GM12878 (cell line): ENCODE measurements at regions of chr17 and their contacts with region 1.

Region 1: GRCh38 chr17:2386400-2387085 is 14.3 kb downstream of the MNT start:
- DNase-seq: no peak
- ATAC-seq: no peak
- H3K4me3 ChIP-seq: no peak overlapping the region
- H3K27ac ChIP-seq: no peak overlapping the region
- H3K4me1 ChIP-seq: peaks cover 4% of the 10 kb centered on the region; the same call in 1 of the 2 replicates
- H3K27me3 ChIP-seq: no peaks in the 10 kb centered on the region
- CTCF ChIP-seq: no peak
- EP300 ChIP-seq: no peak
- POLR2A ChIP-seq: 0 out of 2 replicates have a peak, but pooled peaks have one; percentile 16
- RAD21 ChIP-seq: no peak

Region 2: DNA sequence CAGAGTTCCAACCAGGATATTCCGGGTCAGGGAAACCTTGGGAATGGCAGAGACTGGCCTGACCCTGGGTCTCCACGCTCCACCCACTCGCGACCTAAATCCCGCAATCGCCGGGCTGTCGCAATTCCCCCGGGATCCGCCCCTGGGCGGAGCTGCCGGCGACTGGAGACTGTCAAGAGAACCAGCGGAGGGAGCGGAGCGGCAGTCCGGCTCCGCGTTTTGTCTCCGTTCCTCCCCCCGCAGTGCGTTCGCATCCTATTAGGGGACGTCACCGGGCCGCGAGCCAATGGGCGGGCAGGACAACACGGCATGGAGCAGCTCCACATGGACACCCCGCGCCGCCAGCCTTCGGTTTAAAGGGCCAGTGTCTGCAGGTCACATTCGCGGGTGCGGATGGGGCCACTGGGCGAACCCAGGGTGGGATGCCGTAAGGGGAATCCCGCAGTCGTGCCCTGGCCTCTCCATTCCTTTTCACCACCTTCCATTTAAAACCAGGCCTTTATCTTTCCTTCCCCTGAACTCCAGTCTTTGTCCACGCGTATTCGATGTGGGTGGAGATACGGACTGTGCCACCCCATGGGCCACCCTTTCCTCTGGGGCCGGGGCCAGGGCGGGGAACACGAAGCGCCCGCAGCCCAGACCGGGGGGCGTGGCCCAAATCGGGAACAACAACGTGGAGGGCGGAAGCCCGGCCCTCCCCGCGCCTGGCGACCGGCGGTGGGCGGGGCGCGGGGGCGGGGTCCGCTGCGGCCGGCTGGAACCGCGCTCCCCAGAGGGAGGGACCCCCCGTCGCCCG is 15.1 kb after region 1 on chr17:
- CTCF ChIA-PET with region 1: interaction called, 105 read pairs
- POLR2A ChIA-PET with region 1: interaction called, 16 read pairs
- RAD21 ChIA-PET with region 1: interaction called, 54 read pairs
- SMC1A ChIA-PET with region 1: interaction called, 35 read pairs
- in situ Hi-C with region 1: no loop called
- intact Hi-C with region 1: no loop called
- DNase-seq: peak; percentile 96
- ATAC-seq: peak; percentile 72
- H3K4me3 ChIP-seq: peak overlapping the region; percentile 87
- H3K27ac ChIP-seq: peak overlapping the region; percentile 95
- H3K4me1 ChIP-seq: peaks cover 11% of the 10 kb centered on the region
- H3K27me3 ChIP-seq: no peaks in the 10 kb centered on the region
- CTCF ChIP-seq: no peak
- EP300 ChIP-seq: 0 out of 4 replicates have a peak, but pooled peaks of 1 of the 2 experiments have one; percentile 10
- POLR2A ChIP-seq: 0 out of 2 replicates have a peak, but pooled peaks have one; percentile 41
- RAD21 ChIP-seq: no peak

Region 3: GRCh38 chr17:2406903-2407790 is 20.6 kb after region 1 on chr17:
- CTCF ChIA-PET with region 1: interaction called, 597 read pairs
- POLR2A ChIA-PET with region 1: interaction called, 16 read pairs
- RAD21 ChIA-PET with region 1: interaction called, 376 read pairs
- SMC1A ChIA-PET with region 1: interaction called, 364 read pairs
- in situ Hi-C with region 1: no loop called
- intact Hi-C with region 1: no loop called
- DNase-seq: no peak
- ATAC-seq: no peak
- H3K4me3 ChIP-seq: no peak overlapping the region
- H3K27ac ChIP-seq: no peak overlapping the region
- H3K4me1 ChIP-seq: peaks cover 4% of the 10 kb centered on the region
- H3K27me3 ChIP-seq: no peaks in the 10 kb centered on the region
- CTCF ChIP-seq: no peak
- EP300 ChIP-seq: no peak
- POLR2A ChIP-seq: no peak
- RAD21 ChIP-seq: no peak

Region 4: DNA sequence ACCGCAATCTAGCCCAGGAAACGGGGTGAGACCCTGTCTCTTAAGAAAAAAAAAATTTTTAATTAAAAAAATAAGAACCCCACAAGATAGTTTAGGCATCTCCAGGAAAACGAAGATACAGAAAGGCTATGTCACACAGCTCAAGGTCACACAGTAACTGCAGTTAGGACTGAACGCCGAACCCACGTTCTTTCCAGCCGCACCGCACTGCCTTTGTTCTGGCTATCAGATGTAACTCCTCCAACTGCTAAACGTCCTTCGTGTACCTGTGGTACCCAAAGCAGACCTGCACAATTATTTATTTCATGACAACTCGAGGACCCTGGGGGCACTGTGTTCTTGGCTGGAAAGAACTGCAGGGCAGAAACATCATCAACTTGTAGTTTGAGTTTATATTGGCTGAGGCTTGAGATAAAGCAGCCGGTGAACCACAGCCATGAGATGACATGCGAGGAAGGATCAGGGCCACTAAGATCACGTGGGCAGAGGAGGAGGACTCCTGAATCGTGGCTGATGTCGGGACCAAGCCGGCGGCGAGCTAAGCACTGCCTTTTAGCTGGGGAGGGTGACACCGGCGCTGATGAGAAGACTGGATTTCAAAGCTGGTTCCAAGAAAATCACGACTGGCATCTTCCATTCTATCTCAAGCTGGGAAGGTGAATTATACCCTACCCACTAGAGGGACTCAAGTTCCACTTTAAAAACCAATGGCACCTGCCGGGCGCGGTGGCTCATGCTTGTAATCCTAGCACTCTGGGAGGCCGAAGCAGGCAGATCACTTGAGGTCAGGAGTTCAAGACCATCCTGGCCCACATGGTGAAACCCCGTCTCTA is 35.0 kb after region 1 on chr17:
- CTCF ChIA-PET with region 1: interaction called, 597 read pairs
- POLR2A ChIA-PET with region 1: interaction called, 15 read pairs
- RAD21 ChIA-PET with region 1: interaction called, 376 read pairs
- SMC1A ChIA-PET with region 1: interaction called, 364 read pairs
- in situ Hi-C with region 1: no loop called
- intact Hi-C with region 1: loop called (anchors 1 kb)
- DNase-seq: no peak
- ATAC-seq: no peak
- H3K4me3 ChIP-seq: no peak overlapping the region
- H3K27ac ChIP-seq: no peak overlapping the region
- H3K4me1 ChIP-seq: no peaks in the 10 kb centered on the region
- H3K27me3 ChIP-seq: no peaks in the 10 kb centered on the region
- CTCF ChIP-seq: no peak; a peak in 1 of 6 replicates
- EP300 ChIP-seq: no peak
- POLR2A ChIP-seq: no peak
- RAD21 ChIP-seq: peak; percentile 27

Region 5: DNA sequence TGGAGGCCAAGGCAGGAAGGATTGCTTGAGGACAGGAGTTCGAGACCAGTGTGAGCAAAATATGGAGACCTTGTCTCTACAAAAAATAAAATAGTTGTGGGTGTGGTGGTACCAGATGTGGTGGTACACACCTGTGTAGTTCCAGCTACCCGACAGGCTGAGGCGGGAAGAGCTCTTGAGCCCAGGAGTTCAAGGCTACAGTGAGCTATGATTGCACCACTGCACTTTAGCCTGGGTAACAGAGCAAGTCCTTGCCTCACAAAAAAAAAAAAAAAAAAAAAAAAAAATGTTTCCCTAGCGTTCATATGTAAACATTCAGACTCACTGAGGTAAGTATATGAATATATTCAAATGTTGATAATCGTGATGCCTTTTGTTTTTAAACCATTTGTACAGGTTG is 285.5 kb after region 1 on chr17:
- CTCF ChIA-PET with region 1: interaction called, 14 read pairs
- POLR2A ChIA-PET with region 1: no interaction called
- RAD21 ChIA-PET with region 1: interaction called, 12 read pairs
- SMC1A ChIA-PET with region 1: interaction called, 14 read pairs
- in situ Hi-C with region 1: no loop called
- intact Hi-C with region 1: loop called (anchors 2 kb)
- DNase-seq: no peak
- ATAC-seq: no peak
- H3K4me3 ChIP-seq: no peak overlapping the region
- H3K27ac ChIP-seq: no peak overlapping the region
- H3K4me1 ChIP-seq: no peaks in the 10 kb centered on the region
- H3K27me3 ChIP-seq: no peaks in the 10 kb centered on the region
- CTCF ChIP-seq: no peak
- EP300 ChIP-seq: no peak
- POLR2A ChIP-seq: no peak
- RAD21 ChIP-seq: no peak

Region 6: GRCh38 chr17:2685696-2686095 is 299.2 kb after region 1 on chr17:
- CTCF ChIA-PET with region 1: interaction called, 10 read pairs
- POLR2A ChIA-PET with region 1: no interaction called
- RAD21 ChIA-PET with region 1: no interaction called
- SMC1A ChIA-PET with region 1: no interaction called
- in situ Hi-C with region 1: no loop called
- intact Hi-C with region 1: no loop called
- DNase-seq: no peak
- ATAC-seq: no peak
- H3K4me3 ChIP-seq: no peak overlapping the region
- H3K27ac ChIP-seq: no peak overlapping the region
- H3K4me1 ChIP-seq: no peaks in the 10 kb centered on the region
- H3K27me3 ChIP-seq: no peaks in the 10 kb centered on the region
- CTCF ChIP-seq: no peak
- EP300 ChIP-seq: no peak
- POLR2A ChIP-seq: peak; percentile 76
- RAD21 ChIP-seq: no peak

Region 7: DNA sequence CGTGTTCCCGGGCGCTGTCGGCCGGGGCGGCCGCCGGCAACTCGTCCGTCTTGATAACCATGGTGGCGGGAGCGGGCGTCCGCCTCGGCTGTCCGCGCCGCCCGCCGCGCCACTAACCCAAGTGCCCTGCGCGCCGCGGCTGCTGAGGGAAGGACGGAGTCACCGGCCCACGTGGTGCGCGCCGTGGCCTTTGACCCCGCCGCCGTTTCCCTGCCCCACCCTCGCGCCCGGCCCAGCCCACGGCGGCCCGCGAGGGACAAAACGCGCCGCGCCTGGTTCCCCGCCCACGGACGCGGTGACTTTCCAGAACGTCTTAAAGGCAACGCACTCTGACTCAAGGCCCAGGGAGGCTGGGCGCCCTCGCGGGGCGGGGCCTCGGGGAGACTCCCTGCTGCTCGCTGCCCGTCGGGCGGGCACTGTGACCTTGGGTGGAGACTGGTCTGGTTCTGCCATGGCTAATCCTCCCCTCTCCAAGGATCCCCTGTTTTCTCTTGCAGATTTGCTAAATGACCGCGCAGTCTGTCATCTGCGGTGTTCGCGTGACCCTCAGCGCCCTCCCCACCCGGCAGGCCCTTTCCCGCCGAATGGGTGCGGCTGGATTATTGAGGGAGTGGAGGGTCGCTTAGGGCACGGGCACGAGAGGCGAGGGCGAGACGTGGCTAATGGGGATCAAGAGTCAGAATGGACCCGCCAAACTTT is 325.2 kb after region 1 on chr17 and contains the start of gene CLUH:
- CTCF ChIA-PET with region 1: interaction called, 10 read pairs
- POLR2A ChIA-PET with region 1: no interaction called
- RAD21 ChIA-PET with region 1: interaction called, 3 read pairs
- SMC1A ChIA-PET with region 1: interaction called, 5 read pairs
- in situ Hi-C with region 1: no loop called
- intact Hi-C with region 1: no loop called
- DNase-seq: peak; percentile 83
- ATAC-seq: peak; percentile 88
- H3K4me3 ChIP-seq: peak within 1 kb of the TSS; percentile 95
- H3K27ac ChIP-seq: peak within 1 kb of the TSS; percentile 79
- H3K4me1 ChIP-seq: peaks cover 20% of the 10 kb centered on the region
- H3K27me3 ChIP-seq: no peaks in the 10 kb centered on the region
- CTCF ChIP-seq: no peak
- EP300 ChIP-seq: 0 out of 4 replicates have a peak, but pooled peaks have one; percentile 32 to 52
- POLR2A ChIP-seq: peak; percentile 87
- RAD21 ChIP-seq: no peak
- polyA plus RNA-seq, gene CLUH: 0.11 to 0.82 TPM